Naive thymus-derived CD4-positive, alpha-beta T cell (primary cell): ENCODE measurements at regions of chr3 and their contacts with region 1.

Region 1: GRCh38 chr3:141553055-141553454 is 66.2 kb downstream of the RASA2 start:
- DNase-seq: peak in 7 of 9 donors; percentile 60 to 88 (median 78)
- ATAC-seq: peak; percentile 93
- H3K4me3 ChIP-seq: peak overlapping the region; percentile 12
- H3K4me3 Mint-ChIP-seq: peak overlapping the region in 9 of 10 donors; percentile 15 to 74 (median 53)
- H3K27ac ChIP-seq: peak overlapping the region; percentile 59
- H3K27ac Mint-ChIP-seq: peak overlapping the region; percentile 32 to 90 (median 77)
- H3K4me1 ChIP-seq: peaks cover 24 to 73% of the 10 kb centered on the region in 2 donors
- H3K4me1 Mint-ChIP-seq: peaks cover 36 to 72% (median 63%) of the 10 kb centered on the region in 7 donors
- H3K27me3 ChIP-seq: no peaks in the 10 kb centered on the region
- H3K27me3 Mint-ChIP-seq: no peaks in the 10 kb centered on the region

Region 2: GRCh38 chr3:141477224-141477623 is 75.8 kb before region 1 on chr3:
- CTCF ChIA-PET with region 1: interaction called, 14 read pairs
- POLR2A ChIA-PET with region 1: interaction called, 3 read pairs
- intact Hi-C with region 1: no loop called
- DNase-seq: no peak
- ATAC-seq: no peak
- H3K4me3 ChIP-seq: no peak overlapping the region
- H3K4me3 Mint-ChIP-seq: no peak overlapping the region
- H3K27ac ChIP-seq: no peak overlapping the region
- H3K27ac Mint-ChIP-seq: no peak overlapping the region
- H3K4me1 ChIP-seq: peaks cover 11% of the 10 kb centered on the region in 2 donors
- H3K4me1 Mint-ChIP-seq: peaks cover 24 to 46% (median 32%) of the 10 kb centered on the region in 7 donors
- H3K27me3 ChIP-seq: no peaks in the 10 kb centered on the region
- H3K27me3 Mint-ChIP-seq: peaks cover 0 to 21% (median 0%) of the 10 kb centered on the region in 5 donors

Region 3: GRCh38 chr3:141493184-141493583 is 59.9 kb before region 1 on chr3:
- CTCF ChIA-PET with region 1: interaction called, 4 read pairs
- POLR2A ChIA-PET with region 1: interaction called, 34 read pairs
- intact Hi-C with region 1: loop called in 1 of 2 experiments (anchors 1 kb)
- DNase-seq: peak in 6 of 9 donors; percentile 17 to 54 (median 38)
- ATAC-seq: peak; percentile 89
- H3K4me3 ChIP-seq: no peak overlapping the region
- H3K4me3 Mint-ChIP-seq: peak overlapping the region in 8 of 10 donors; percentile 27 to 97 (median 51)
- H3K27ac ChIP-seq: peak overlapping the region; percentile 94
- H3K27ac Mint-ChIP-seq: peak overlapping the region in 8 of 9 donors; percentile 38 to 93 (median 70)
- H3K4me1 ChIP-seq: peaks cover 69 to 73% of the 10 kb centered on the region in 2 donors
- H3K4me1 Mint-ChIP-seq: peaks cover 53 to 99% (median 87%) of the 10 kb centered on the region in 7 donors
- H3K27me3 ChIP-seq: no peaks in the 10 kb centered on the region
- H3K27me3 Mint-ChIP-seq: no peaks in the 10 kb centered on the region

Region 4: DNA sequence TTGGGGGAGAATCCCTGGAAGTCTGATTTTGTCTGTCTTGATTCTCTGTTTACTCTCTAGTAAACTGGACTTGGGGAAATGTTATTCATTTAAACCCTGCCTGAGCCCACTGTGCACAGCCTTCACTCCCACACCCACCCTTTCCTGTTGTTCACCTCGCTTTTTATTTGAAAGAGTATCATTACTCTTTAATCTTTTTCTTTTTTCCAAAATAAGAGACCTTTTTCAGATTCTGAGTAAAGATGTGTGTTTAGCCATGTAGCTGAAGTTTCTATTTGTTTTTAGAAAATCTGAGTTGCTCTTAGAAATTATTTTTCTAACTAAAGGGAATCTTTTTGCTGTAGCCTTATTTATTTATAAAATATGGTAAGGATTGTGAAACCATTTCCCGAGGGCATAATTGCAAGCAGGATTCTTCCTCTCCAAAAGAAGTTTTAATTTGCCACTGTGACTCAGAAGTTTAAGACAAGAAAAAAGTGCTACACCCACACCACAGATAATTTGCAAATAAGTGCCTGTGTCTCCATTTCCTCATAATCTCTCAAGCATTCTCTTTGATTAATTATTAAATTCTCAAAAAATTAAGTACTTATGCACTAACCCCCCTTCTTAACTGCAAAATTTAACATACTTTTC is 22.8 kb before region 1 on chr3:
- CTCF ChIA-PET with region 1: interaction called, 6 read pairs
- POLR2A ChIA-PET with region 1: interaction called, 3 read pairs
- intact Hi-C with region 1: loop called in 1 of 2 experiments (anchors 1 kb)
- DNase-seq: peak in 6 of 9 donors; percentile 44 to 74 (median 60)
- ATAC-seq: peak; percentile 87
- H3K4me3 ChIP-seq: peak overlapping the region; percentile 4
- H3K4me3 Mint-ChIP-seq: peak overlapping the region; percentile 40 to 94 (median 82)
- H3K27ac ChIP-seq: peak overlapping the region; percentile 62
- H3K27ac Mint-ChIP-seq: peak overlapping the region in 8 of 9 donors; percentile 87 to 97 (median 94)
- H3K4me1 ChIP-seq: peaks cover 22 to 77% of the 10 kb centered on the region in 2 donors
- H3K4me1 Mint-ChIP-seq: peaks cover 40 to 86% (median 83%) of the 10 kb centered on the region in 7 donors
- H3K27me3 ChIP-seq: no peaks in the 10 kb centered on the region
- H3K27me3 Mint-ChIP-seq: no peaks in the 10 kb centered on the region